AG04449 (cell line): ENCODE measurements at regions of chr11 and their contacts with region 1.

Region 1: GRCh38 chr11:120229451-120230424 is 10.2 kb upstream of the POU2F3 start:
- DNase-seq: no peak
- H3K4me3 ChIP-seq: no peak overlapping the region
- CTCF ChIP-seq: peak; percentile 56

Region 2: DNA sequence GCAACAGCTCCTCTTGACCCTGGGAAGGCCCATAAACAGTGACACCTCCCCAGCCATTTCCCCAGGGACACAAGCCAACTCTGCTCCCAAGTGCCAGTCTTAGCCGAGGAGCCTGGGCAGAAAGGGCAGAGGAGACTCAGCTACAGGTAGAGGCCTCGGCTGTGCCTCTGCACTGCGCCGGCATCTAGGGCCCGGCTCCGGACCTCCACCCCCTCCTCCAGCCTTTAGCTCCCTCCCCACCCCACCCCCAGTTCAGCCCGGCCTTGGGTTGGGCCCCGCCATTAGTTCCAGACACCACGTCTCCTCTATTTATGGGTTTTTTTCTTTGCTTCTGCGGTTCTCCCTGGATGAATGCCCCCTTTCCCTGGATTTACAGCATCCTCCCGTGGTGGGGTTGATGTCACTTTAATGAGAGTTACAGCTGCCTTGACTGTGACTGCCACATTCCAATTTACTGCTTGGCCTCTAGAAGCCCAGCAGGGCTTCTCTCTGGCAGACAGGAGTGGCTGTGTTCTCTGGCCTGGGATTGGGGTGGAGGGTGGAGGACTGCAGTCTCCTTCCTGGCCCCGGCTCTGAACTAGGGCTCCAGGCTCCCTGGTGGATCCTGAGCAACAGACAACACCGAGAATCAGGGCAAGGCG is 32.4 kb before region 1 on chr11:
- CTCF ChIA-PET with region 1: interaction called, 12 read pairs
- POLR2A ChIA-PET with region 1: no interaction called
- DNase-seq: no peak
- H3K4me3 ChIP-seq: no peak overlapping the region
- CTCF ChIP-seq: no peak

Region 3: GRCh38 chr11:120210626-120211521 is 18.9 kb before region 1 on chr11 and contains the start of gene OAF:
- CTCF ChIA-PET with region 1: interaction called, 71 read pairs
- POLR2A ChIA-PET with region 1: no interaction called
- DNase-seq: no peak
- H3K4me3 ChIP-seq: peak within 1 kb of the TSS; percentile 74
- CTCF ChIP-seq: peak; percentile 21

Region 4: GRCh38 chr11:120248551-120249278 is 19.0 kb after region 1 on chr11:
- CTCF ChIA-PET with region 1: interaction called, 101 read pairs
- POLR2A ChIA-PET with region 1: no interaction called
- DNase-seq: no peak
- H3K4me3 ChIP-seq: no peak overlapping the region
- CTCF ChIP-seq: no peak

Region 5: GRCh38 chr11:120363436-120363835 is 133.7 kb after region 1 on chr11:
- CTCF ChIA-PET with region 1: no interaction called
- POLR2A ChIA-PET with region 1: no interaction called
- DNase-seq: no peak
- H3K4me3 ChIP-seq: no peak overlapping the region
- CTCF ChIP-seq: no peak

Region 6: GRCh38 chr11:120784566-120785251 is 555.0 kb after region 1 on chr11:
- CTCF ChIA-PET with region 1: no interaction called
- POLR2A ChIA-PET with region 1: no interaction called
- DNase-seq: no peak
- H3K4me3 ChIP-seq: no peak overlapping the region
- CTCF ChIP-seq: no peak